IMR-90 (cell line): ENCODE measurements at regions of chr10 and their contacts with region 1.

Region 1: GRCh38 chr10:91251430-91252056 is 31.1 kb downstream of the PCGF5 start:
- DNase-seq: peak; percentile 62
- ATAC-seq: peak; percentile 76
- H3K4me3 ChIP-seq: no peak overlapping the region
- H3K27ac ChIP-seq: no peak overlapping the region
- H3K4me1 ChIP-seq: peaks cover 2% of the 10 kb centered on the region; the same call in 1 of the 2 replicates
- H3K27me3 ChIP-seq: no peaks in the 10 kb centered on the region
- CTCF ChIP-seq: peak; percentile 96
- POLR2A ChIP-seq: peak; percentile 38; the same call in 1 of the 2 replicates
- RAD21 ChIP-seq: peak; percentile 96

Region 2: GRCh38 chr10:90885176-90885575 is 366.4 kb before region 1 on chr10:
- CTCF ChIA-PET with region 1: interaction called, 4 read pairs
- POLR2A ChIA-PET with region 1: no interaction called
- dilution Hi-C with region 1: loop called (anchors 25 kb)
- in situ Hi-C with region 1: no loop called
- intact Hi-C with region 1: loop called (anchors 1 kb)
- DNase-seq: peak; percentile 85
- ATAC-seq: peak; percentile 86
- H3K4me3 ChIP-seq: no peak overlapping the region
- H3K27ac ChIP-seq: peak overlapping the region; percentile 36
- H3K4me1 ChIP-seq: peaks cover 17% of the 10 kb centered on the region
- H3K27me3 ChIP-seq: no peaks in the 10 kb centered on the region
- CTCF ChIP-seq: no peak
- POLR2A ChIP-seq: no peak
- RAD21 ChIP-seq: no peak

Region 3: GRCh38 chr10:90912174-90912573 is 339.4 kb before region 1 on chr10:
- CTCF ChIA-PET with region 1: interaction called, 12 read pairs
- POLR2A ChIA-PET with region 1: no interaction called
- dilution Hi-C with region 1: no loop called
- in situ Hi-C with region 1: loop called (anchors 5 kb)
- intact Hi-C with region 1: loop called (anchors 1 kb)
- DNase-seq: no peak
- ATAC-seq: no peak
- H3K4me3 ChIP-seq: no peak overlapping the region
- H3K27ac ChIP-seq: no peak overlapping the region
- H3K4me1 ChIP-seq: peaks cover 1% of the 10 kb centered on the region
- H3K27me3 ChIP-seq: no peaks in the 10 kb centered on the region
- CTCF ChIP-seq: no peak
- POLR2A ChIP-seq: no peak
- RAD21 ChIP-seq: no peak

Region 4: DNA sequence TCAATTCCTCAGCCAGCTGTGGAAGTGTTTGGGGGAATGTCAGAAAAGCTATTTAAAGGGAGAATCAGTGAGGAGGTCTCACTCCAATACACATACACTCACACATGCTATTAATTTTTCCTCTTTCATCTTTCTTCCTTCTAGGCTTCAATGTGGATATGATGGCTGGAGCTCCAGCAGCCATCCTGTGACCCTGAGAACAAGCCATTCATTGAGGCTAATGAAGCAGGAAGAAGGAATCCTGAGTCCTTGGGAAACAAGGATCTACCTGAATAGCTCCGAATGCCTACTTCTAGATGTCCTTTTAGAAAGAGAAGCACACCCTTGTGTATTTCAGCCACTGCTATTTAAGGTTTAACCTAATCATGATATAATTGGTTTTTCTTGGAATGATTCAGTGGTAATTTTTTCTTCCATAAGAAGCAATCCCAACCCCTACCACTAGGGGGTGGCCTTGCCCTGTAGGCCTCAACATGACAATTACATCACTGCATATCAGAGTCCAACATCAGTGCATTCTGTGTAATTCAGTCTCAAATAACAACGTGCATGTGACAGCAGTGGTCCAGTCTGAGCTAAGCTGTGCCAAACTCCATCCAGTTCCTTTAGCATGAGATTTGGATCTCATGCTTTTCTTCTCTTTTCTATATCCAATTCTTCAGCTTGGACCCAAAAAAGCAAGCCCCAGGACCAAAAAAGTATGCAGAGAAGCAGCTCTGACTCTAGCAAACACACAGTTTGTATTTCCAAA is 245.4 kb before region 1 on chr10:
- CTCF ChIA-PET with region 1: interaction called, 12 read pairs
- POLR2A ChIA-PET with region 1: no interaction called
- dilution Hi-C with region 1: no loop called
- in situ Hi-C with region 1: loop called (anchors 5 kb)
- intact Hi-C with region 1: loop called (anchors 5 kb)
- DNase-seq: peak; percentile 79
- ATAC-seq: peak; percentile 98
- H3K4me3 ChIP-seq: no peak overlapping the region
- H3K27ac ChIP-seq: no peak overlapping the region
- H3K4me1 ChIP-seq: peaks cover 2% of the 10 kb centered on the region; the same call in 1 of the 2 replicates
- H3K27me3 ChIP-seq: no peaks in the 10 kb centered on the region
- CTCF ChIP-seq: peak; percentile 92
- POLR2A ChIP-seq: no peak
- RAD21 ChIP-seq: peak; percentile 87

Region 5: GRCh38 chr10:91043173-91043910 is 208.2 kb before region 1 on chr10:
- CTCF ChIA-PET with region 1: interaction called, 5 read pairs
- POLR2A ChIA-PET with region 1: no interaction called
- dilution Hi-C with region 1: no loop called
- in situ Hi-C with region 1: no loop called
- intact Hi-C with region 1: loop called (anchors 1 kb)
- DNase-seq: peak; percentile 16
- ATAC-seq: peak; percentile 76
- H3K4me3 ChIP-seq: no peak overlapping the region
- H3K27ac ChIP-seq: no peak overlapping the region
- H3K4me1 ChIP-seq: no peaks in the 10 kb centered on the region
- H3K27me3 ChIP-seq: peaks cover 15% of the 10 kb centered on the region
- CTCF ChIP-seq: peak; percentile 48
- POLR2A ChIP-seq: no peak
- RAD21 ChIP-seq: peak; percentile 51; the same call in 1 of the 2 replicates

Region 6: GRCh38 chr10:91088300-91089140 is 163.0 kb before region 1 on chr10:
- CTCF ChIA-PET with region 1: interaction called, 8 read pairs
- POLR2A ChIA-PET with region 1: no interaction called
- dilution Hi-C with region 1: no loop called
- in situ Hi-C with region 1: no loop called
- intact Hi-C with region 1: loop called (anchors 2 kb)
- DNase-seq: peak; percentile 15
- ATAC-seq: peak; percentile 63
- H3K4me3 ChIP-seq: no peak overlapping the region
- H3K27ac ChIP-seq: no peak overlapping the region
- H3K4me1 ChIP-seq: 0 out of 2 replicates have a peak, but pooled peaks cover 3% of the 10 kb centered on the region
- H3K27me3 ChIP-seq: no peaks in the 10 kb centered on the region; the same call in 1 of the 2 replicates
- CTCF ChIP-seq: peak; percentile 29
- POLR2A ChIP-seq: no peak
- RAD21 ChIP-seq: peak; percentile 29

Region 7: DNA sequence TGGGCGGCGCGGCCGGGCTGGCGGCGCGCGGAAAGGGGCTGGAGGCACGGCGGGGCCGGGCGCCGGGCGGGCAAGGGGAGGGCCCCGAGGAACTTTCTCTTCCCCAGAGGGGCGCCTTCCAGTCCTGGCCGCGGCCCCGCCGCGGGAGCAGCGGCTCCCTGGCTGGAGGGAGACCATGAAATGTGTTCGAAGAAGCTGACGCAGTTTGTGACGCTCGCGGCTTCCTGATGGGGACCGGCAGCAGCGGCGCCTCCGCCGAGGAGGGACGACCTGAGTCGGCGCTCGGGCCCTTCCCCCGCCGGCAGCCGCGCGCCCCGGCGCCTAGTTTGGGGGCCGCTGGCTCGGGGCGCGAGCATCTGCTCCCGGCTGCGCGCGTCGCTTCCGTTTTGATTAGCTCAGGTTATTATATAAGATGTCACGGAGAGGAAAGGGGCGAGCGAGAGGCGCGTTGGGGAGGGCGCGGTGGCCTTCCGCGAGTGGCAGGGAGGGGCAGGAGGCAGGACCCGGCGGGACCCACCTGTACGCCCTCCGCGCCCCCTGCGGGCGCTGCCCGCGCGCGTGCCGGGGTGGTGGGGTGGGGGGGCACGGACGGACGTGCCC is 88.2 kb before region 1 on chr10:
- CTCF ChIA-PET with region 1: interaction called, 4 read pairs
- POLR2A ChIA-PET with region 1: interaction called, 3 read pairs
- dilution Hi-C with region 1: no loop called
- in situ Hi-C with region 1: no loop called
- intact Hi-C with region 1: loop called (anchors 2 kb)
- DNase-seq: peak; percentile 62
- ATAC-seq: peak; percentile 53
- H3K4me3 ChIP-seq: peak overlapping the region; percentile 68
- H3K27ac ChIP-seq: peak overlapping the region; percentile 58
- H3K4me1 ChIP-seq: peaks cover 6% of the 10 kb centered on the region; the same call in 1 of the 2 replicates
- H3K27me3 ChIP-seq: no peaks in the 10 kb centered on the region
- CTCF ChIP-seq: no peak
- POLR2A ChIP-seq: peak; percentile 91
- RAD21 ChIP-seq: no peak